ENCODE measurements at regions of chr6 and their contacts with region 1.

Region 1: DNA sequence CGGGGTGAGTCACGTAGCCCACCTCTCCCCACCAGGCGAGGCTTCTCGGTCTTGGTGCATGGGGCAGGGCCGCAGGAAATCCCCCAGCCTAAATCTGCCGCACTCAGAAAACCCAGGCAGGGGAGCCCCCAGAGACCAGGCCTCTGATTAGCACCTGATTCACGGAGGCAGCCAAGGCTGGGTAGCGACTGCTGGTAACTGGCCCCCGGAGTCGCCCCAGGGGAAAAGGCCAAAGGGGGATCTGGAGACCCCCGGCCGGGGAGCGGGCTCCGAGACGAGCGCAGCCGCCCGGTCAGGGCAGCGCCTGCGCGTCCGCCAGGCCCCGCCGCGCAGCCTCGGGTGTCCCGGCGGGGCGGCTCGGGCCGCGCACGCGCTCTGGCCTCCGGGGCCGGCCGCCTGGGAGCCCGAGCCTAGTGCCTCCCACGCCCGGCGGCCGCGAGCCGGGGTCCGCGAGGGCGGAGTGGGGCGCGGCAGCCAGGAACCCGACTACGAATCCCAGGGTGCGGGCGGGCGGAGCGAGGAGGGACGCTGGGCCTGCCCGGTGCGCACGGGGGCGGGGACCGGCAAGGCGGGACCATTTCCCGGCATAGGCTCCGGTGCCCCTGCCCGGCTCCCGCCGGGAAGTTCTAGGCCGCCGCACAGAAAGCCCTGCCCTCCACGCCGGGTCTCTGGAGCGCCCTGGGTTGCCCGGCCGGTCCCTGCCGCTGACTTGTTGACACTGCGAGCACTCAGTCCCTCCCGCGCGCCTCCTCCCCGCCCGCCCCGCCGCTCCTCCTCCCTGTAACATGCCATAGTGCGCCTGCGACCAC is at the start of gene DUSP22:
- DNase-seq: peak; percentile 63 to 88 (median 79)
- H3K4me3 ChIP-seq: peak within 1 kb of the TSS; percentile 60 to 92 (median 74)
- H3K27ac ChIP-seq: peak within 1 kb of the TSS; percentile 60 to 99 (median 95)
- H3K27me3 ChIP-seq: peaks cover 0 to 3% (median 0%) of the 10 kb centered on the region in 45 donors
- CTCF ChIP-seq: peak in 7 of 56 donors; percentile 13 to 24 (median 18)
- total RNA-seq, gene DUSP22: 41.2 to 72.5 (median 53.5) TPM

Region 2: GRCh38 chr6:217048-217659 is 74.7 kb before region 1 on chr6:
- intact Hi-C with region 1: no loop called
- DNase-seq: no peak
- H3K4me3 ChIP-seq: no peak overlapping the region
- H3K27ac ChIP-seq: no peak overlapping the region
- H3K27me3 ChIP-seq: peaks cover 0 to 5% (median 0%) of the 10 kb centered on the region in 45 donors
- CTCF ChIP-seq: peak in 25 of 56 donors; percentile 9 to 49 (median 22)

Region 3: GRCh38 chr6:331622-332531 is 40.0 kb after region 1 on chr6:
- intact Hi-C with region 1: loop called in 1 of 2 experiments (anchors 5 kb)
- DNase-seq: peak in 4 of 10 donors; percentile 19 to 64 (median 38)
- H3K4me3 ChIP-seq: peak overlapping the region in 2 of 59 donors; percentile 4 to 10
- H3K27ac ChIP-seq: peak overlapping the region in 2 of 59 donors; percentile 11 to 29
- H3K27me3 ChIP-seq: peaks cover 0 to 38% (median 0%) of the 10 kb centered on the region in 45 donors
- CTCF ChIP-seq: peak in 2 of 56 donors; percentile 10 to 13

Region 4: DNA sequence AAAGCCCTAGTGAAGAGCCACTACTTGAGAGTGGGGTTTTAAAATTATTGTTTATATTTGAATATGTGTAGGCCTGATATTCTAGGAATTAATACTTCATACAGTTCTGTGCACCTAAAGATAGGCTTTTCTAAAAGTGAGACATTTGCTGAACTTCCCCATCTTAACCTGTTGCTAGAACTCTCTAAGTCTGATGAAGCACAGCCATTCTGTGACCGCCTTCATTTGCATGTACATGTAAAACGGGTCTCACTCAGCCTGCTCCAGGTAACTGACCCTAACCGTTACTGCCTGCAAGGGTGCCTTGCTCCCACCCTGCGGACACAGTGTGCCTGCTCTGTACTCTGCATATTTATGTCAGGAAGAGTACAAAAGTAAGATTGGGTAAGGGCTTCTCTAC is 55.3 kb after region 1 on chr6:
- intact Hi-C with region 1: no loop called
- DNase-seq: no peak
- H3K4me3 ChIP-seq: no peak overlapping the region
- H3K27ac ChIP-seq: no peak overlapping the region
- H3K27me3 ChIP-seq: peaks cover 0 to 37% (median 0%) of the 10 kb centered on the region in 45 donors
- CTCF ChIP-seq: no peak

Region 5: GRCh38 chr6:453152-453551 is 161.3 kb after region 1 on chr6:
- intact Hi-C with region 1: loop called in 1 of 2 experiments (anchors 5 kb)
- DNase-seq: peak; percentile 9 to 87 (median 82)
- H3K4me3 ChIP-seq: peak overlapping the region in 50 of 59 donors; percentile 7 to 64 (median 36)
- H3K27ac ChIP-seq: peak overlapping the region in 42 of 59 donors; percentile 5 to 80 (median 60)
- H3K27me3 ChIP-seq: peaks cover 0 to 4% (median 0%) of the 10 kb centered on the region in 45 donors
- CTCF ChIP-seq: peak in 20 of 56 donors; percentile 7 to 57 (median 34)

Region 6: GRCh38 chr6:484086-484745 is 192.3 kb after region 1 on chr6:
- intact Hi-C with region 1: loop called (anchors 2 to 10 kb)
- DNase-seq: no peak
- H3K4me3 ChIP-seq: no peak overlapping the region
- H3K27ac ChIP-seq: no peak overlapping the region
- H3K27me3 ChIP-seq: no peaks in the 10 kb centered on the region
- CTCF ChIP-seq: no peak

Region 7: DNA sequence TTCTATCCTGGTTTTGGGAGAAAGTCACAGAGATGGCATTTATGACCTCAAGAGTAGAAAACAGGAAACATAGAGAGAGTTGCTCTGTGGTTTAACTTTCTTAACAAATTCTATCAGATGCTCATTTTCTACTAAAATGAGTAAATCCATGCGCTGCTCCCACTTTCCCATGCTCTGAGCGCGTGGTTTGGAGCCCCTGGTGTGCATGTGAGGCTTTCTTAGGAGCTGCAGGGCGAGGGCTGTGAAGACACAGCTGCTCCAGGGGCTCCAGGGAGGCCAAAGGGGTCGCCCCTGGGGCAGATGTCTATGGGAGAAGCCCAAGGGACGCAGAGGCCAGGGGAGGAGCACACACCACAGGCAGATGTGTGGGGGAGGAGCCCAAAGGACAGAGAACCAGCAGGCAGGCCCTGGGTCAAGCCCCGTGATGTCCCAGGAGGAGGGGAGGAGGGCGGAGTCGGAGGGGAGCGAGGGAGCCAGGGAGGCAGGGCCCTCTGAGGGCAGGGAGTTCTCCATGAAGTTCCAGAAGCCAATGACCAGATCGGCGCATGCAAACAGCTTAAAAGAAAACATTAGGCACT is 222.6 kb after region 1 on chr6:
- intact Hi-C with region 1: loop called in 1 of 2 experiments (anchors 10 kb)
- DNase-seq: no peak
- H3K4me3 ChIP-seq: no peak overlapping the region
- H3K27ac ChIP-seq: peak overlapping the region in 10 of 59 donors; percentile 19 to 83 (median 68)
- H3K27me3 ChIP-seq: no peaks in the 10 kb centered on the region
- CTCF ChIP-seq: no peak

Region 8: GRCh38 chr6:710601-711571 is 419.0 kb after region 1 on chr6:
- intact Hi-C with region 1: no loop called
- DNase-seq: peak; percentile 40 to 79 (median 56)
- H3K4me3 ChIP-seq: peak overlapping the region; percentile 47 to 86 (median 75)
- H3K27ac ChIP-seq: peak overlapping the region in 58 of 59 donors; percentile 35 to 97 (median 88)
- H3K27me3 ChIP-seq: no peaks in the 10 kb centered on the region
- CTCF ChIP-seq: peak in 2 of 56 donors; percentile 14 to 46

Region 9: DNA sequence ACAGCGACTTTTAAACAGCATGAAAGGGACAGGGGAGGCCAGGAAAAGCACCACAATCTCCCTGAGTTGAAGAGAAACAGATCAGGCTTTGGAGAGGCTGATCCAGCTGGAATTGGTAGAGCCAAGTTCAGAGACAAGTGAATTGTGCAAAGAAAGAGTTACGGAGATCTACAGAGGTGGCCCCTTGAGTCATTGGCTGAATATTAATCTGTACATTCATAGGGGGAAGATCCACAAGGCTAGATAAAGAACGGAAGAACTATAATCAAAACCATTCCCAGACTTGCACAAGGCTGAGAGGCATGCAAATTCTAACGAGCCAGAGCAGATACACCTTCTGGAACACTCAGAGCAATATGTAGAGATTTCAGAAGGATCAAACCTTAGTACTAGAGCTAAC is 1005.8 kb after region 1 on chr6:
- intact Hi-C with region 1: no loop called
- DNase-seq: no peak
- H3K4me3 ChIP-seq: no peak overlapping the region
- H3K27ac ChIP-seq: no peak overlapping the region
- H3K27me3 ChIP-seq: peaks cover 0 to 23% (median 0%) of the 10 kb centered on the region in 45 donors
- CTCF ChIP-seq: no peak